CD4-positive, alpha-beta T cell (primary cell): ENCODE measurements at regions of chr7 and their contacts with region 1.

Region 1: DNA sequence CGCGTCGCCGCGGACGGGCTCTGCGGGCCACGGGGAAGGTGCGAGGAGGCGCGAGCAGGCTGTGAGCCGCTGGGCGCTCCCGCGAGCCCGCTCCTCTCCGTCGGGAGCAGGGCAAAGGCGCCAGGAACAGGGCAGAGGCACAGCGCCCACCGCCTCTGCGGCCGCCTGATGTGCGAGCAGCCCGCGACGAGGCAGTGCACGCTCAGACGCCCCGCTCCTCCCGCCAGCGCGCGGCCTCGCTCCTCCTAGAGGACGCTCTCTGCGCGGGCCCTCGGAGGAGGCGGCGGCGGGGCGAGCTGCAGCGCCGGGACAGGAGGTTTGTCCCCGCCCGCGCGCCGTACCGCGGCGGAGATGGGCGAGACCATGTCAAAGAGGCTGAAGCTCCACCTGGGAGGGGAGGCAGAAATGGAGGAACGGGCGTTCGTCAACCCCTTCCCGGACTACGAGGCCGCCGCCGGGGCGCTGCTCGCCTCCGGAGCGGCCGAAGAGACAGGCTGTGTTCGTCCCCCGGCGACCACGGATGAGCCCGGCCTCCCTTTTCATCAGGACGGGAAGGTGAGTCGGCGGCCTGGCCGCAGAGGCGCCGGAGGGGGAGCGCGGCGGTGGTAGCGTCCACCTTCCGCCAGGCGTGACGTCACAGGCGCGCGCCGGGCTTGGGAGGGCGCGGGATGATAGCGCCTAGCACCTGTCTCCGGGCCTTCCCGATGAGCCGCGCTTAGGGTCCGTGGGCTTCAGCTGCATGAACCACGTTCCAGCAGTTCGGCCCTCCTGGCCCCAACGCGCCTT is 731 bp downstream of the LANCL2 start:
- DNase-seq: peak; percentile 87 to 98 (median 94)
- ATAC-seq: peak; percentile 85
- H3K4me3 ChIP-seq: peak overlapping the region; percentile 72
- H3K4me3 Mint-ChIP-seq: peak overlapping the region; percentile 99
- H3K27ac ChIP-seq: peak overlapping the region; percentile 94 to 98
- H3K27ac Mint-ChIP-seq: no peak overlapping the region
- H3K4me1 ChIP-seq: peaks cover 16% of the 10 kb centered on the region
- H3K4me1 Mint-ChIP-seq: peaks cover 10% of the 10 kb centered on the region
- H3K27me3 ChIP-seq: no peaks in the 10 kb centered on the region
- H3K27me3 Mint-ChIP-seq: no peaks in the 10 kb centered on the region
- CTCF ChIP-seq: no peak

Region 2: GRCh38 chr7:54764861-54765260 is 601.0 kb before region 1 on chr7:
- CTCF ChIA-PET with region 1: interaction called, 4 read pairs
- POLR2A ChIA-PET with region 1: interaction called, 28 read pairs
- intact Hi-C with region 1: loop called in 1 of 2 experiments (anchors 5 kb)
- DNase-seq: no peak
- ATAC-seq: no peak
- H3K4me3 ChIP-seq: no peak overlapping the region
- H3K4me3 Mint-ChIP-seq: no peak overlapping the region
- H3K27ac ChIP-seq: no peak overlapping the region
- H3K27ac Mint-ChIP-seq: no peak overlapping the region
- H3K4me1 ChIP-seq: peaks cover 3% of the 10 kb centered on the region
- H3K4me1 Mint-ChIP-seq: peaks cover 6% of the 10 kb centered on the region
- H3K27me3 ChIP-seq: peaks cover 7 to 18% of the 10 kb centered on the region in 2 experiments
- H3K27me3 Mint-ChIP-seq: peaks cover 39% of the 10 kb centered on the region
- CTCF ChIP-seq: no peak

Region 3: DNA sequence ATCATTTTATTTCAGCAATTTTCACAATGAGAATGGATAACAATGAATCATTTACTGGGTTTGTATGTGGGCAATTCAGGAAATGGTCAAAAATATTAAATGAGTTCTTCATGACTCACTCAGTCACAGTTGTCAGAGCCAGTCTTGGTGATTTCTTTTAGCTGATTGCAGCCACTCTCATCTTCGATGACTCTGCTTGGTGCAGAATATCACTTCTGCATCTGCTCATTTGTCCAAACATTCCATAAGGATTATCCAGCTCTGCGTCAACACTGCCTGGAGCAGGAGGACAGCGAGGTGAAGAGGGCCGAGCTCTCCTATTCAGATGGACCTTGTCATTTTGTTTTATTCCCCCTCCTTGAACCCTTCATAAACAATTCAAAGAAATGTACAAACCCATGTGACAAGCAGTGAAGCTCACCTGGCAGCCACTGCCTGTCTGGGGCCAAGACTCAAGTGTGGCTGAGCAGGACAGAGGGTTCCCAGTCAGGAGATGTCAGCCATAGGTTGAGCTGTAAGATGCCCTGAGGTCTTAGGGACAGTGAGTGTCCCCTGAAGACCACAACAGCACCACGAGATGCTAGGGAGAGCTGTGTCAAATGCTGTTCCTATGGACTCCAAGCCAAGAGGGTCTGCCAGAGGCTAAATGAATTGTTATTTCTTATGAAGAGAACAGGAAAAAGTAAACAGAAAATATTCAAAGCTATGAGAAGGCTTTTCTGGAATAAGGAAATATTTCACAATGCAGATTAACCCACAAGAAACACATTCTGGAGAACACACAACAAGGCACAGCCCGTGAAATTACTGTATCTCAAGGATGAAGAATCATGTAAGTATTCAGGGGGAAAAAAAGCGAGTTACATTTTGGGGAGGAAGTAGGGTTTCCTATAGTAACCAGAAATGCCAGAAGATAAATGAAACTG is 380.2 kb before region 1 on chr7:
- CTCF ChIA-PET with region 1: no interaction called
- POLR2A ChIA-PET with region 1: no interaction called
- intact Hi-C with region 1: no loop called
- DNase-seq: no peak
- ATAC-seq: no peak
- H3K4me3 ChIP-seq: no peak overlapping the region
- H3K4me3 Mint-ChIP-seq: no peak overlapping the region
- H3K27ac ChIP-seq: no peak overlapping the region
- H3K27ac Mint-ChIP-seq: no peak overlapping the region
- H3K4me1 ChIP-seq: no peaks in the 10 kb centered on the region
- H3K4me1 Mint-ChIP-seq: no peaks in the 10 kb centered on the region
- H3K27me3 ChIP-seq: no peaks in the 10 kb centered on the region
- H3K27me3 Mint-ChIP-seq: peaks cover 42% of the 10 kb centered on the region
- CTCF ChIP-seq: no peak

Region 4: GRCh38 chr7:55299273-55299967 is 66.4 kb before region 1 on chr7:
- CTCF ChIA-PET with region 1: no interaction called
- POLR2A ChIA-PET with region 1: no interaction called
- intact Hi-C with region 1: no loop called
- DNase-seq: no peak
- ATAC-seq: no peak
- H3K4me3 ChIP-seq: no peak overlapping the region
- H3K4me3 Mint-ChIP-seq: no peak overlapping the region
- H3K27ac ChIP-seq: no peak overlapping the region
- H3K27ac Mint-ChIP-seq: no peak overlapping the region
- H3K4me1 ChIP-seq: no peaks in the 10 kb centered on the region
- H3K4me1 Mint-ChIP-seq: no peaks in the 10 kb centered on the region
- H3K27me3 ChIP-seq: no peaks in the 10 kb centered on the region
- H3K27me3 Mint-ChIP-seq: peaks cover 34% of the 10 kb centered on the region
- CTCF ChIP-seq: no peak

Region 5: GRCh38 chr7:55415173-55415778 is 49.4 kb after region 1 on chr7:
- CTCF ChIA-PET with region 1: interaction called, 7 read pairs
- POLR2A ChIA-PET with region 1: interaction called, 3 read pairs
- intact Hi-C with region 1: loop called (anchors 2 to 5 kb)
- DNase-seq: peak; percentile 62 to 88 (median 78)
- ATAC-seq: peak; percentile 99
- H3K4me3 ChIP-seq: no peak overlapping the region
- H3K4me3 Mint-ChIP-seq: no peak overlapping the region
- H3K27ac ChIP-seq: no peak overlapping the region
- H3K27ac Mint-ChIP-seq: no peak overlapping the region
- H3K4me1 ChIP-seq: no peaks in the 10 kb centered on the region
- H3K4me1 Mint-ChIP-seq: no peaks in the 10 kb centered on the region
- H3K27me3 ChIP-seq: no peaks in the 10 kb centered on the region
- H3K27me3 Mint-ChIP-seq: no peaks in the 10 kb centered on the region
- CTCF ChIP-seq: peak; percentile 95

Region 6: DNA sequence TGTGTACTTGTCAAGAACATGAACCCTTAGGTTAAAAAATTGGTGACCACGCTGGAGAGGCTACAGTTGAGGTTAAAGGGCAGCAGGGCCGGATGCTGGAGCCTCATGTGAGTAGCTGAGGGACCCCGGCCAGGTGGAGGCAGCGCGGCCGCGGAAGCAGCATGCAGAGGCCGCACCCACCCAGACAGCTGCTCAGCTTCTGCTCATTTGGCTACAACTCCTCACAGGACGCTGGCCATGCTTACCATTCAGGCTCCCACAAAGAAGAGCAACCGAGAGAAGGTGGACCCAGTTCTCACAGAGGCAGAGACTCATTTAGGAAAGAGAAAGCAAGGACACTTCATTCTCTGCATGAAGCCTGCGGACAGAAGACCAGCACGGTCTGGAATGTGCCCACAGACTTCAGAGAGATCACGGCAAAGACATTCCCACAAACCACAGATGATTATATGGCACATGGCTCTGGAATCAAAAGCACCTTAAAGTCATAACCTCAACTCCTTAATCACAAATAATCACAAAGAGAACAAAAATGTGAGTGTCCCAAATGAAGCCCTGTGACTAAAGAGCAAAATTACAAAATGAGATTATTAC is 112.0 kb after region 1 on chr7:
- CTCF ChIA-PET with region 1: no interaction called
- POLR2A ChIA-PET with region 1: interaction called, 3 read pairs
- intact Hi-C with region 1: loop called in 1 of 2 experiments (anchors 5 kb)
- DNase-seq: peak in 1 of 14 experiments; percentile 5
- ATAC-seq: no peak
- H3K4me3 ChIP-seq: no peak overlapping the region
- H3K4me3 Mint-ChIP-seq: no peak overlapping the region
- H3K27ac ChIP-seq: no peak overlapping the region
- H3K27ac Mint-ChIP-seq: peak overlapping the region; percentile 94
- H3K4me1 ChIP-seq: peaks cover 76% of the 10 kb centered on the region
- H3K4me1 Mint-ChIP-seq: peaks cover 86% of the 10 kb centered on the region
- H3K27me3 ChIP-seq: no peaks in the 10 kb centered on the region
- H3K27me3 Mint-ChIP-seq: no peaks in the 10 kb centered on the region
- CTCF ChIP-seq: no peak

Region 7: DNA sequence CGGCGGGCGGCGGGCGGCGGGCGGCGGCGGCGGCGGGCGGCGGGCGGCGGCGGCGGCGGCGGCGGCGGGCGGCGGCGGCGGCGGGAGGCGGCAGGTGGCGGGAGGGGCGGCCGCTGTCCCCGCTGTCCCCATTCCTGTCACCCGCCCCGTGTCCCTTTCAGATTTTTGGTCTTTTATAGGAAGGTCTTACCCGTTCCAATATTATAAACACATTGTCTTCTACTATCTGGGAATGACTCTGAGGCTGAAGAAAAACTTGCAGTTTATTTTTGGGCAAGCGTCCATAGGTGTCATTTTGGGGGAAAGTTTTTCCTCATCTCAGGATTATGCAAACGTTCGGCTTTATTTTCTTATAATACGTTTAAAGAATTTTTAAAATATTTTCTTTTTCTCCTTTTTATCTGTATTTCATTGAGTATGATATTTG is 522.0 kb after region 1 on chr7:
- CTCF ChIA-PET with region 1: no interaction called
- POLR2A ChIA-PET with region 1: interaction called, 3 read pairs
- intact Hi-C with region 1: loop called (anchors 2 to 10 kb)
- DNase-seq: peak in 1 of 14 experiments; percentile 1
- ATAC-seq: peak; percentile 12
- H3K4me3 ChIP-seq: peak overlapping the region; percentile 60
- H3K4me3 Mint-ChIP-seq: peak overlapping the region; percentile 90
- H3K27ac ChIP-seq: no peak overlapping the region
- H3K27ac Mint-ChIP-seq: peak overlapping the region; percentile 90
- H3K4me1 ChIP-seq: peaks cover 13% of the 10 kb centered on the region
- H3K4me1 Mint-ChIP-seq: peaks cover 6% of the 10 kb centered on the region
- H3K27me3 ChIP-seq: no peaks in the 10 kb centered on the region
- H3K27me3 Mint-ChIP-seq: no peaks in the 10 kb centered on the region
- CTCF ChIP-seq: no peak

Region 8: DNA sequence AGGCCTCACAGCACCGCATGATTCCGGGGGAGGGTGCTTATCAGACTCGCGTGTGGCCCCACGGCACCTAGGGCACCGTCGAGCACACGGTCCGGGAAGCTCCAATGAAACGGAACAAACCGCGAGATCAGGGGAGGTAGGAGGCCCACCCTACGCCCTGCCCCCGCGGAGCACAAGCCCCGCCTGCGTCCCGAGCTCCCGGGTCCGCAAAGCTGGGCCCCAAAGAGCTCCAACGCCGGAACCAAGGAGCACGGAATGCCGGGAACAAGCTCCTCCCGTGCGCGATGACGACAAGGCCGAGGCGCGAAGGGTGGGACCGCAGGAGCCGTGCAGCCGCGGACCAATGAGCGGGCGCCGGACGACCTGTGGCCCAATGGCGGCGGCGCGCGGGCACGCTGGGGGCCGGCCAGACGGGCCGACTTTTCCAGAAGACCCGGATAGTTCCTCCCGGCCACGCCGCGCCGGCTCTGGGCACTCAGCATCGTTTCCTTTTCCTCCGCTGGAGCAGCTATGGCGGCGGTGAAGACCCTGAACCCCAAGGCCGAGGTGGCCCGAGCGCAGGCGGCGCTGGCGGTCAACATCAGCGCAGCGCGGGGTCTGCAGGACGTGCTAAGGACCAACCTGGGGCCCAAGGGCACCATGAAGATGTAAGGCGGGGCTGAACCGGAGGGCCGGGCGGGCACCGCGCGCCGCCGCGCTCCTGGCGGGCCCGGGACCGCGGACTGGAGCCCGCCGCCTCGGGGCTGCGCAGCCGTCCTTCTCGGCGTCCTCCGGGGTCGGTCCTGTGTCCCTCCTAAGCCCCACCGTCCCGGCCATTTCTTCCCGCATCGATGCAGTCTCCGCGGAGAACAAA is 685.7 kb after region 1 on chr7 and contains the starts of genes CCT6A and PSPH:
- CTCF ChIA-PET with region 1: no interaction called
- POLR2A ChIA-PET with region 1: interaction called, 7 read pairs
- intact Hi-C with region 1: loop called in 1 of 2 experiments (anchors 5 kb)
- DNase-seq: peak; percentile 66 to 95 (median 86)
- ATAC-seq: peak; percentile 86
- H3K4me3 ChIP-seq: peak within 1 kb of the TSS; percentile 74
- H3K4me3 Mint-ChIP-seq: peak within 1 kb of the TSS; percentile 93
- H3K27ac ChIP-seq: peak within 1 kb of the TSS; percentile 66 to 81
- H3K27ac Mint-ChIP-seq: peak within 1 kb of the TSS; percentile 83
- H3K4me1 ChIP-seq: peaks cover 27% of the 10 kb centered on the region
- H3K4me1 Mint-ChIP-seq: peaks cover 54% of the 10 kb centered on the region
- H3K27me3 ChIP-seq: no peaks in the 10 kb centered on the region
- H3K27me3 Mint-ChIP-seq: no peaks in the 10 kb centered on the region
- CTCF ChIP-seq: no peak
- total RNA-seq, gene CCT6A: 31.8 to 33.0 TPM
- total RNA-seq, gene PSPH: 1.2 to 1.9 TPM

Region 9: GRCh38 chr7:56106108-56107073 is 740.5 kb after region 1 on chr7 and contains the start of gene CHCHD2:
- CTCF ChIA-PET with region 1: no interaction called
- POLR2A ChIA-PET with region 1: interaction called, 25 read pairs
- intact Hi-C with region 1: loop called (anchors 2 to 5 kb)
- DNase-seq: peak; percentile 85 to 99 (median 90)
- ATAC-seq: peak; percentile 92
- H3K4me3 ChIP-seq: peak within 1 kb of the TSS; percentile 97
- H3K4me3 Mint-ChIP-seq: peak within 1 kb of the TSS; percentile 96
- H3K27ac ChIP-seq: peak within 1 kb of the TSS; percentile 91 to 95
- H3K27ac Mint-ChIP-seq: peak within 1 kb of the TSS; percentile 98
- H3K4me1 ChIP-seq: peaks cover 22% of the 10 kb centered on the region
- H3K4me1 Mint-ChIP-seq: peaks cover 37% of the 10 kb centered on the region
- H3K27me3 ChIP-seq: no peaks in the 10 kb centered on the region
- H3K27me3 Mint-ChIP-seq: no peaks in the 10 kb centered on the region
- CTCF ChIP-seq: no peak
- total RNA-seq, gene CHCHD2: 250 to 252 TPM